Endothelial cell of umbilical vein (primary cell): ENCODE measurements at regions of chr1 and their contacts with region 1.

Region 1: DNA sequence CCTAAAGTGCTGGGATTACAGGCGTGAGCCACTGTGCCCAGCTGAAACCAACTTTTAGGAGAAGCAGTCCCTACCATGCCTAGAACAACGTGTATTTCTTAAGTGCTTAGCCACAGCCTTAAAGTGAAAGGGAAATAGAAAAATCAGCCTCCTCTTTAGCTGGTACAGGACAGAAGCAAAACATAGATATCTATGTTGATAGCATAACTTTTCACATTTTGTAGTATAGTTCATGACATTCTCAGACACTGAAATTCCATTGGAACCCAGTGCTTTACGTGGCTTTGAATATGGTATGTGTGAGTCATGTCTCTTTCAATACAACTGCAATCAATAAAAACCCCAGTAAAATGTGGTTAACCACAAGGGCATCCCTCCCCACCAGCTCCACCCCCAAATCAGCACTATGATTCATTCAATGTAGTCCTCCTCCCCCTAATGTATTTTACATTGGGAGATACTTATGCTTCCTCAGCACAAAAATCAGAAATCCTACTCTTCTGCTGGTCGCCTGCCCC is 32.1 kb downstream of the TGFB2 start:
- DNase-seq: peak; percentile 88
- H3K4me3 ChIP-seq: no peak overlapping the region
- H3K27ac ChIP-seq: peak overlapping the region; percentile 72
- H3K4me1 ChIP-seq: peaks cover 47% of the 10 kb centered on the region
- H3K27me3 ChIP-seq: no peaks in the 10 kb centered on the region
- CTCF ChIP-seq: no peak
- POLR2A ChIP-seq: peak; percentile 51

Region 2: GRCh38 chr1:218345673-218346390 is 31.4 kb before region 1 on chr1:
- CTCF ChIA-PET with region 1: interaction called, 3 read pairs
- POLR2A ChIA-PET with region 1: no interaction called
- dilution Hi-C with region 1: no loop called
- intact Hi-C with region 1: loop called (anchors 1 kb)
- DNase-seq: peak; percentile 74
- H3K4me3 ChIP-seq: peak overlapping the region; percentile 86 to 95 (median 88)
- H3K27ac ChIP-seq: peak overlapping the region; percentile 85
- H3K4me1 ChIP-seq: peaks cover 32% of the 10 kb centered on the region
- H3K27me3 ChIP-seq: no peaks in the 10 kb centered on the region
- CTCF ChIP-seq: no peak
- POLR2A ChIP-seq: peak; percentile 75

Region 3: GRCh38 chr1:218390618-218391017 is 13.4 kb after region 1 on chr1:
- CTCF ChIA-PET with region 1: interaction called, 7 read pairs
- POLR2A ChIA-PET with region 1: interaction called, 3 read pairs
- dilution Hi-C with region 1: no loop called
- intact Hi-C with region 1: loop called (anchors 1 kb)
- DNase-seq: peak; percentile 91
- H3K4me3 ChIP-seq: no peak overlapping the region
- H3K27ac ChIP-seq: no peak overlapping the region
- H3K4me1 ChIP-seq: peaks cover 12% of the 10 kb centered on the region
- H3K27me3 ChIP-seq: no peaks in the 10 kb centered on the region
- CTCF ChIP-seq: no peak
- POLR2A ChIP-seq: peak; percentile 61

Region 4: GRCh38 chr1:218439541-218440295 is 62.5 kb after region 1 on chr1:
- CTCF ChIA-PET with region 1: no interaction called
- POLR2A ChIA-PET with region 1: no interaction called
- dilution Hi-C with region 1: no loop called
- intact Hi-C with region 1: no loop called
- DNase-seq: no peak
- H3K4me3 ChIP-seq: no peak overlapping the region
- H3K27ac ChIP-seq: no peak overlapping the region
- H3K4me1 ChIP-seq: no peaks in the 10 kb centered on the region
- H3K27me3 ChIP-seq: no peaks in the 10 kb centered on the region
- CTCF ChIP-seq: no peak
- POLR2A ChIP-seq: no peak

Region 5: DNA sequence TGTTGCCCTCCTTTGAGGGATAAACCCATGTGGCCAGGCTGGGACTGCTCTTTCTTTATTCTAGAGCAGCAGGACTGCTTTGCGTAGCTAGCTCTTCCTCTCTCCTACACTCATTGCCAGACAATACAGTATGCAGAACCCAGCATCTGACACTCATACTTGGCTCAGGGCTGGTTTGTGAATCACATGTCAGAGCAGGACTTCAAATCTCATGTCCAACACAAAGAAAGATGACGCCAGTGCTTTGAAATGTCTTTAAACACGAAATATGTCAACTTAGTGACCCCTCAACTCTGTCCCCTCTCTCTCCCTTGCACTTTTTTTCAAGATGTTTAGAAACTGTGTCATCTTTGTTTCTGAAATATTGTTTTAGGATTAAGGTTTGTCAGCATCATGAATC is 102.9 kb after region 1 on chr1:
- CTCF ChIA-PET with region 1: no interaction called
- POLR2A ChIA-PET with region 1: no interaction called
- dilution Hi-C with region 1: no loop called
- intact Hi-C with region 1: loop called (anchors 1 kb)
- DNase-seq: peak; percentile 93
- H3K4me3 ChIP-seq: no peak overlapping the region
- H3K27ac ChIP-seq: peak overlapping the region; percentile 100
- H3K4me1 ChIP-seq: peaks cover 33% of the 10 kb centered on the region
- H3K27me3 ChIP-seq: no peaks in the 10 kb centered on the region
- CTCF ChIP-seq: no peak
- POLR2A ChIP-seq: no peak

Region 6: GRCh38 chr1:218660678-218661053 is 283.5 kb after region 1 on chr1:
- CTCF ChIA-PET with region 1: no interaction called
- POLR2A ChIA-PET with region 1: no interaction called
- dilution Hi-C with region 1: no loop called
- intact Hi-C with region 1: loop called (anchors 1 kb)
- DNase-seq: peak; percentile 91
- H3K4me3 ChIP-seq: no peak overlapping the region
- H3K27ac ChIP-seq: peak overlapping the region; percentile 64
- H3K4me1 ChIP-seq: peaks cover 26% of the 10 kb centered on the region
- H3K27me3 ChIP-seq: no peaks in the 10 kb centered on the region
- CTCF ChIP-seq: no peak
- POLR2A ChIP-seq: no peak

Region 7: GRCh38 chr1:219324629-219325367 is 947.6 kb after region 1 on chr1:
- CTCF ChIA-PET with region 1: no interaction called
- POLR2A ChIA-PET with region 1: no interaction called
- dilution Hi-C with region 1: no loop called
- intact Hi-C with region 1: loop called (anchors 5 kb)
- DNase-seq: peak; percentile 83
- H3K4me3 ChIP-seq: no peak overlapping the region
- H3K27ac ChIP-seq: peak overlapping the region; percentile 78
- H3K4me1 ChIP-seq: peaks cover 44% of the 10 kb centered on the region
- H3K27me3 ChIP-seq: no peaks in the 10 kb centered on the region
- CTCF ChIP-seq: no peak
- POLR2A ChIP-seq: peak; percentile 63